ENCODE measurements at regions of chr22 and their contacts with region 1.

Region 1: GRCh38 chr22:50008151-50009040 is 4.2 kb downstream of the IL17REL start:
- DNase-seq: no peak
- CTCF ChIP-seq: no peak

Region 2: GRCh38 chr22:49936953-49937570 is 71.3 kb before region 1 on chr22:
- CTCF ChIA-PET with region 1: no interaction called
- POLR2A ChIA-PET with region 1: no interaction called
- DNase-seq: no peak
- CTCF ChIP-seq: no peak

Region 3: GRCh38 chr22:49992921-49993648 is 15.3 kb before region 1 on chr22:
- CTCF ChIA-PET with region 1: interaction called, 30 read pairs
- POLR2A ChIA-PET with region 1: no interaction called
- DNase-seq: peak; percentile 88
- CTCF ChIP-seq: peak; percentile 93

Measured in GM10248 (cell line).